ENCODE measurements at regions of chr10 and their contacts with region 1.

Region 1: GRCh38 chr10:70093335-70093944 is 39.2 kb downstream of the AIFM2 start:
- DNase-seq: no peak
- ATAC-seq: no peak
- H3K4me3 Mint-ChIP-seq: no peak overlapping the region
- H3K27ac Mint-ChIP-seq: no peak overlapping the region
- H3K4me1 Mint-ChIP-seq: no peaks in the 10 kb centered on the region
- H3K27me3 Mint-ChIP-seq: no peaks in the 10 kb centered on the region
- CTCF ChIP-seq: no peak

Region 2: GRCh38 chr10:70052462-70053217 is 40.8 kb before region 1 on chr10 and contains the start of gene MACROH2A2:
- CTCF ChIA-PET with region 1: interaction called, 10 read pairs
- POLR2A ChIA-PET with region 1: no interaction called
- DNase-seq: peak; percentile 77
- ATAC-seq: peak; percentile 91
- H3K4me3 Mint-ChIP-seq: peak within 1 kb of the TSS; percentile 77
- H3K27ac Mint-ChIP-seq: no peak within 1 kb of the TSS
- H3K4me1 Mint-ChIP-seq: peaks cover 29% of the 10 kb centered on the region
- H3K27me3 Mint-ChIP-seq: peaks cover 79% of the 10 kb centered on the region
- CTCF ChIP-seq: no peak
- total RNA-seq, gene MACROH2A2: 33.0 to 35.4 TPM (median 33.5 TPM) in 3 replicates

Region 3: GRCh38 chr10:70106958-70107791 is 13.7 kb after region 1 on chr10:
- CTCF ChIA-PET with region 1: interaction called, 17 read pairs
- POLR2A ChIA-PET with region 1: no interaction called
- DNase-seq: peak; percentile 85
- ATAC-seq: peak; percentile 99
- H3K4me3 Mint-ChIP-seq: no peak overlapping the region
- H3K27ac Mint-ChIP-seq: no peak overlapping the region
- H3K4me1 Mint-ChIP-seq: peaks cover 11% of the 10 kb centered on the region
- H3K27me3 Mint-ChIP-seq: no peaks in the 10 kb centered on the region
- CTCF ChIP-seq: peak; percentile 70

Region 4: GRCh38 chr10:70115948-70116682 is 22.7 kb after region 1 on chr10:
- CTCF ChIA-PET with region 1: interaction called, 17 read pairs
- POLR2A ChIA-PET with region 1: no interaction called
- DNase-seq: peak; percentile 77
- ATAC-seq: peak; percentile 85
- H3K4me3 Mint-ChIP-seq: no peak overlapping the region
- H3K27ac Mint-ChIP-seq: 0 out of 2 replicates have a peak overlapping the region, but pooled peaks have one; percentile 30
- H3K4me1 Mint-ChIP-seq: peaks cover 10% of the 10 kb centered on the region; the same call in 1 of the 2 replicates
- H3K27me3 Mint-ChIP-seq: no peaks in the 10 kb centered on the region
- CTCF ChIP-seq: peak; percentile 92

Measured in WTC11 (cell line).